H1 (cell line): ENCODE measurements at regions of chr15 and their contacts with region 1.

Region 1: DNA sequence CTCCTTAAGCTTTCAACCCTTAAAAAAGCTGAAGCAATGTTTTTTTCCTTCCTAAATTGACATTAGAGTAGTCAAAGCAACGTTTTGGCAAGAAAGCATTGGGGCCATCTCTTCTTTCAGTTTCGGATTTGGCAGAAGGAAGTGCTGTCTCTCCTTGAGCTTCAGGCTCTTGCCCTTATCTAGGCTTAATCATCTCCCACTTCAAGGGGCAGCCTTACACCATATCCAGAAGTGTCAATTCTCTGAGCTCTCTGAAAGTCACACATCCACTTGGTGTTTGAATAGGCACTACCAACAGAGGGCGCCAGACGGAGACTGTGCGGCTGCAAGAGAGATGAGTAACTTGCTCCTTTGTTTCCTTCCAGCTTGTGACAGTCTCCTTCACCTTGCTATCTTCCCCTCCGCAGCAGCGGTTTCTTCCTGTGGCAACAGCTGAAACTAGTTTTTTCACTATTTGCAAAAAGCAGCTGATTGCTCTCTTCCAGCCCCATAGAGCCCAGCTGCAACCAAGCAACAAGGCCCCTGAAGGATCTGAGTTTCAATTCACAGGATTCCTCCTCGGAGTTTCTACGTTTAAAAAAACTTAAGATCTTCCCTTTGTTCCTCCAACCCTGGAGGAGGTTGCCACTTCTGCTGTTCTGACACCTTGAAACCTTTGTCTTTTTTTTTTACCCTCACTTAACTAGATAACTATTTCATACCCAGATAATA is 147.0 kb upstream of the SLCO3A1 start:
- DNase-seq: peak; percentile 72 to 87
- H3K4me3 ChIP-seq: no peak overlapping the region
- H3K27ac ChIP-seq: no peak overlapping the region
- H3K4me1 ChIP-seq: peaks cover 0 to 3% (median 0%) of the 10 kb centered on the region in 4 experiments; a peak in 1 of 7 replicates
- H3K27me3 ChIP-seq: no peaks in the 10 kb centered on the region
- CTCF ChIP-seq: peak; percentile 69 to 97 (median 89)
- EP300 ChIP-seq: no peak
- POLR2A ChIP-seq: no peak
- RAD21 ChIP-seq: peak; percentile 78 to 86

Region 2: DNA sequence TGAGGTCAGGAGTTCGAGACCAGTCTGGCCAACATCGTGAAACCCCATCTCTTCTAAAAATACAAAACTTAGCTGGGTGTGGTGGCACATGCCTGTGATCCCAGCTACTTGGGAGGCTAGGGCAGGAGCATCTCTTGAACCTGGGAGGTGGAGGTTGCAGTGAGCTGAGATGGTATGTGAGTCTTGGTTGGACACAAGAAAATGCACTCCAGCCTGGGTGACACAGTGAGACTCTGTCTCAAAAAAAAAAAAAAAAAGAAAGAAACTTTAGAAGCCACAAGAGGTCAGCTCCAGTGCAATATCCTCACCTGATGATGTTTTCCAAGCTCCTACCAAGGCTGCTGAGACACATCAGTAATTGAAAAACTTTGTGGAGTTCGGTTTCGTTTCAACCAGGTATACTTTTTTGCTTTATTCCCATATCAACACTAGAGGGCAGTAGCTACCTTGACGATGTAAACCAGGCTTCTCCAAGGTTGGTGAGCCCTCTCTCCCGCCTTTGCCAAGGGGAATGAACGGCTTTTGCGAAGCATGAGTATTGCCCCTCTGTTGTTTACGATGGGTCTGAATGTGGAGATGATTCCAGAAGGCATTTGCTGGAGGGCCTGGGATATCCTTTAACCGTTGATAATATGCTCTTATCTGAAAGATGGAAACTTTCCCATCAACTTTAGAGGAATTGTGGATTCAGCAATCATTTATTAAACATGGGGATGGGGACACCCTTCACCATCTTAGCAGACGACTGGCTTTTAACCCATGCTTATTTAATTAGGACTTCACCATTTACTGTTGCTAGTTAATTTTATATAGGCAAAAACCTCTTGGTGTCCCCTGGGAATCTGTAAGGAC is 403.7 kb before region 1 on chr15:
- CTCF ChIA-PET with region 1: interaction called, 27 read pairs
- POLR2A ChIA-PET with region 1: no interaction called
- DNase-seq: peak; percentile 31 to 52
- H3K4me3 ChIP-seq: no peak overlapping the region
- H3K27ac ChIP-seq: no peak overlapping the region
- H3K4me1 ChIP-seq: no peaks in the 10 kb centered on the region
- H3K27me3 ChIP-seq: peaks cover 0 to 3% (median 2%) of the 10 kb centered on the region in 4 experiments; a peak in 3 of 7 replicates
- CTCF ChIP-seq: peak; percentile 18 to 82 (median 77)
- EP300 ChIP-seq: no peak
- POLR2A ChIP-seq: no peak
- RAD21 ChIP-seq: peak; percentile 98 to 99

Region 3: DNA sequence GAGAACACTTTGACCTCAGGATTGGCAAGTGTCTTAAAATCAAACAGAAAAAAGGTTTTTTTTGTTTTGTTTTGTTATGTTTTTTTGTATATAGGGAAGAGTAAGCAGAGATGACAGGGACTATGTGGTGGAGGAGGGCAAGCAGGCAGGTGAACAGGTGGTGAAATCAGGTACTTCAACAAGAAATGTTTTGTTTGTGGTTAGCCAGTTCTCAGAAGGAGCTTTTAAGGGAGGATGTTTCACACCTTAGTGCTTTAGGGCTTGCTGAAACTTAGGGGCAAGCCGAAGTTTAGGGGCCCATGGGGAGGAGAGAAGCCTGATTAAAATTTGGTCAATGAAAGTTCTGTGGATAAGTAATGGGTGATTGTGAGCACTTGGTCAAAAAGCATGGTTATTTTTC is 223.7 kb before region 1 on chr15:
- CTCF ChIA-PET with region 1: no interaction called
- POLR2A ChIA-PET with region 1: no interaction called
- DNase-seq: no peak
- H3K4me3 ChIP-seq: no peak overlapping the region
- H3K27ac ChIP-seq: no peak overlapping the region
- H3K4me1 ChIP-seq: no peaks in the 10 kb centered on the region
- H3K27me3 ChIP-seq: no peaks in the 10 kb centered on the region
- CTCF ChIP-seq: no peak
- EP300 ChIP-seq: no peak
- POLR2A ChIP-seq: no peak
- RAD21 ChIP-seq: no peak

Region 4: GRCh38 chr15:91694831-91695210 is 11.7 kb before region 1 on chr15:
- CTCF ChIA-PET with region 1: interaction called, 50 read pairs
- POLR2A ChIA-PET with region 1: no interaction called
- DNase-seq: no peak
- H3K4me3 ChIP-seq: no peak overlapping the region
- H3K27ac ChIP-seq: no peak overlapping the region
- H3K4me1 ChIP-seq: no peaks in the 10 kb centered on the region
- H3K27me3 ChIP-seq: no peaks in the 10 kb centered on the region
- CTCF ChIP-seq: no peak
- EP300 ChIP-seq: no peak
- POLR2A ChIP-seq: no peak
- RAD21 ChIP-seq: no peak

Region 5: DNA sequence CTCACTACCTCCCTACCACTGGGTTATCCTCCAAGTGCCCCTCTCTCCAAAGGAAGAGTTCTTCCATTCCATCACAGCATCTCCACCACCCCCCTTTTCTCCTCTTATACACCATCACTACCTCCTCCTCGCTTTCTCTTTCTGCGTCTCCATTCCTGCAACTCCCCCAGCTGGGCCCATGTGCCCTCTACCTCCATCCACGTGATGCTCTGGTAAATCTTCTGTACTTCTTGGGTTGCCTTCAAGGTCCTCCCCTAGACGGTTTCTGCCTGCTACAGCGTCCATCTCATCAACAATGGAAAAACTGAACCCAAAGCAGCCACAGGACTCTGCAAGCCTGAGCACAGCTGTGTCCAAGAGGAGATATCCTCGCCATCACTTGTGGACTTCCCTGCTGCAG is 17.5 kb after region 1 on chr15:
- CTCF ChIA-PET with region 1: interaction called, 39 read pairs
- POLR2A ChIA-PET with region 1: no interaction called
- DNase-seq: no peak
- H3K4me3 ChIP-seq: no peak overlapping the region
- H3K27ac ChIP-seq: no peak overlapping the region
- H3K4me1 ChIP-seq: no peaks in the 10 kb centered on the region
- H3K27me3 ChIP-seq: no peaks in the 10 kb centered on the region
- CTCF ChIP-seq: no peak
- EP300 ChIP-seq: no peak
- POLR2A ChIP-seq: no peak
- RAD21 ChIP-seq: no peak

Region 6: DNA sequence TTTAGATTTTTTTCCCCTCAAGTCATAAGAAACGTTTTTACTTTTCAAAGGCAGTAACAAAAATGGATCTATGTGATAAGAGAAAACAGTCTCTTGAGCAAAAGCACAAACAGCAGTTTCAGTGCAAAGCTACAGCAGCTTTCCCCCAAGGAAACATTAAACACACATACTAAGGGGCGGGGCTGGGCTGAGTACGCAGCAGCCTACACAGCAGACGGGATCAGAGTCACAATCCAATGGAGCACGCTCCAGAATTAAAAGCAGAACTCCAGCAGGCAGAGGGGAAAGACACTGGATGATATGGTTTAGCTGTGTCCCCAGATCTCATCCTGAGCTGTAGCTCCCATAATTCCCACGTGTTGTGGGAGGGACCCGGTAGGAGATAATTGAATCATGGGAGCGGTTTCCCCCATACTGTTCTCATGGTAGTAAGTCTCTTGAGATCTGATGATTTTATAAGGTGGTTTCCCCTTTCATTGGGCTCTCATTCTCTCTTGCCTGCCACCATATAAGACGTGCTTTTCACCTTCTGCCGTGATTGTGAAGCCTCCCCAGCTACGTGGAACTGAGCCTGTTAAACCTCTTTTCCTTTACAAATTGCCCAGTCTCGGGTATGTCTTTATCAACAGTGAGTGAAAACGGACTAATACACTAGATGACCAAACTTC is 30.8 kb after region 1 on chr15:
- CTCF ChIA-PET with region 1: interaction called, 14 read pairs
- POLR2A ChIA-PET with region 1: no interaction called
- DNase-seq: no peak
- H3K4me3 ChIP-seq: no peak overlapping the region
- H3K27ac ChIP-seq: no peak overlapping the region
- H3K4me1 ChIP-seq: no peaks in the 10 kb centered on the region
- H3K27me3 ChIP-seq: no peaks in the 10 kb centered on the region
- CTCF ChIP-seq: no peak
- EP300 ChIP-seq: no peak
- POLR2A ChIP-seq: no peak
- RAD21 ChIP-seq: no peak

Region 7: GRCh38 chr15:91844928-91845327 is 138.5 kb after region 1 on chr15:
- CTCF ChIA-PET with region 1: interaction called, 33 read pairs
- POLR2A ChIA-PET with region 1: no interaction called
- DNase-seq: no peak
- H3K4me3 ChIP-seq: no peak overlapping the region
- H3K27ac ChIP-seq: no peak overlapping the region
- H3K4me1 ChIP-seq: 0 out of 7 replicates have a peak, but pooled peaks cover 0 to under 1% (median 0%) of the 10 kb centered on the region in 4 experiments
- H3K27me3 ChIP-seq: 0 out of 7 replicates have a peak, but pooled peaks cover 0 to 2% (median 1%) of the 10 kb centered on the region in 4 experiments
- CTCF ChIP-seq: no peak
- EP300 ChIP-seq: no peak
- POLR2A ChIP-seq: no peak
- RAD21 ChIP-seq: no peak

Region 8: DNA sequence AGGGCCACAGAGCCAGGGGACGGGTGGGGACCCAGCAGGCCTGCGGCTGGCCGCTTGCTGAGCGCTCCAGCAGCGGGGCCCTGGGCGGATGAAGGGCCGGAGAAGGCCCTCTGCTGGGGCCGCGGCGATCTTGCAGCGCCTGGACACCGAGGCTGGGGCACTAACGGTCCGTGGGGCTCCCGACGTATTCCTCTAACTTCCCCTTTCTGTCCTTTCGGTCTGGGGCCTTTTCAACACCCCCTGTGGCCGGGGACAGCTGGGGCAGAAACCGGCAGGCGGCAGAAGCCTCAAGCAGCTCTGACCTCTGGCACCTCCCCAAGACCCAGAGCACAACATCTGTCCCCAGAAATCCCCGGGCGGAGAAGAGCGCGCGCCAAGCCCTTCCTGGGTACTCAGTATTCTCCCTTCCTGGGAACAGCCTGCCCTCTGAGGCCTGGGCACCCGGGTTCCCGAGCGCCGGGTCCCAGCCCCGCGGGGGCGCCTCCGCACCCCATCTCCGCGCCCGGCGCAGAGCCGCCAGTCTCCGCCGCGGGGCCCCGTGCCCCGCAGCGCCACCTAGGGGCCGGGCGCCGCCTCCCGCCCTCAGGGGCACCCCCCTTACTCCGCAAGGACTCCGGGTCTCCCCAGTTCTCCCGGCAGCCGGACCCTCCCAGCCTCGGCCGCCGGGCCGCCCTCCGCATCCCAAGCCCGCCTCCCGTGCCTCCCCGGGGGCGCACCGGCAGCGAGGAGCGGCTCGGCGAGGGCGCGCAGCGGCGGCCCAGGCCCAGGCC is 146.4 kb after region 1 on chr15:
- CTCF ChIA-PET with region 1: interaction called, 33 read pairs
- POLR2A ChIA-PET with region 1: interaction called, 3 read pairs
- DNase-seq: peak in 1 of 2 experiments; percentile 86
- H3K4me3 ChIP-seq: peak overlapping the region; percentile 66 to 86 (median 74)
- H3K27ac ChIP-seq: no peak overlapping the region
- H3K4me1 ChIP-seq: peaks cover 7 to 15% (median 11%) of the 10 kb centered on the region in 4 experiments; a peak in 6 of 7 replicates
- H3K27me3 ChIP-seq: peaks cover 0 to 11% (median 10%) of the 10 kb centered on the region in 4 experiments; a peak in 5 of 7 replicates
- CTCF ChIP-seq: peak; percentile 63 to 88 (median 76)
- EP300 ChIP-seq: no peak
- POLR2A ChIP-seq: peak in 1 of 2 experiments; percentile 19; a peak in 1 of 3 replicates
- RAD21 ChIP-seq: peak; percentile 50 to 56

Region 9: DNA sequence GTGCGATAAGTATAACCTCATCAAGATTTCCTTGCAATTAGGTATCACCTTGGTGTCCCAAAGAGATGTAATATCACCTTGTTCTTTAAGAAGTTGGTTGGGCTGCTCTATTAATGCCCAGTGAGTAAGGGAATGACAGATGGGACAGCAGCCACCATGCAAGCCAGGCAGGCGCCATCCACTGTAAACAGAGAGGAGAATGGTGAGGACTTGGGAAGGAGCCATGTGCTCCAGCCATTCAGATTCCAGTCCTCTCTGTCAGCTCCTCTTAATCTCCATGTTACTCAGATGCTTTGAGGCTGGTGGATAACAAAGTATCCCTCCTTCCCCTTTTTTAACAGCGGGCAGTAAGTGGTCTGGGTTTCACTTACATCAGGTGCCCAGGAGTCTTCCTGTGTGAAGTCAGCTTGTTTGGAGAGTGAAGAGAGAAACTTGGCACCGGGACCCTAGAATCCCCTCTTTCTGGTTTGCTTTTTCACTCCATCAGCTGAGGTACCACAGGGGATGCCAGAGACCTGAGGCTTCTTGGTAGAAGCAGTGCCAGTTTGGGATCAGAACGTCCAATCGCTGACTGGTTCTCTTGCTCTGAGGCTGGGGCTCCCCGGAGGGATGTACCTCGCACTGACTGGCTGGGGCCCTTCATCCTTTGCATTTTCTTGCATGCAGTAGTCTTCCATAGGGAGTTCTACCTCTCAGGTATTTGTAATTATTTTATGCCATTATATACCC is 176.5 kb after region 1 on chr15:
- CTCF ChIA-PET with region 1: no interaction called
- POLR2A ChIA-PET with region 1: no interaction called
- DNase-seq: peak in 1 of 2 experiments; percentile 36
- H3K4me3 ChIP-seq: no peak overlapping the region; a peak in 1 of 8 replicates
- H3K27ac ChIP-seq: no peak overlapping the region
- H3K4me1 ChIP-seq: peaks cover 3 to 19% (median 12%) of the 10 kb centered on the region in 4 experiments; a peak in 6 of 7 replicates
- H3K27me3 ChIP-seq: no peaks in the 10 kb centered on the region
- CTCF ChIP-seq: no peak
- EP300 ChIP-seq: no peak
- POLR2A ChIP-seq: no peak
- RAD21 ChIP-seq: no peak

Region 10: GRCh38 chr15:91896341-91897055 is 190.0 kb after region 1 on chr15:
- CTCF ChIA-PET with region 1: no interaction called
- POLR2A ChIA-PET with region 1: no interaction called
- DNase-seq: no peak
- H3K4me3 ChIP-seq: no peak overlapping the region
- H3K27ac ChIP-seq: no peak overlapping the region
- H3K4me1 ChIP-seq: peaks cover 0 to 16% (median 2%) of the 10 kb centered on the region in 4 experiments; a peak in 4 of 7 replicates
- H3K27me3 ChIP-seq: no peaks in the 10 kb centered on the region
- CTCF ChIP-seq: no peak
- EP300 ChIP-seq: no peak
- POLR2A ChIP-seq: no peak
- RAD21 ChIP-seq: no peak

Region 11: DNA sequence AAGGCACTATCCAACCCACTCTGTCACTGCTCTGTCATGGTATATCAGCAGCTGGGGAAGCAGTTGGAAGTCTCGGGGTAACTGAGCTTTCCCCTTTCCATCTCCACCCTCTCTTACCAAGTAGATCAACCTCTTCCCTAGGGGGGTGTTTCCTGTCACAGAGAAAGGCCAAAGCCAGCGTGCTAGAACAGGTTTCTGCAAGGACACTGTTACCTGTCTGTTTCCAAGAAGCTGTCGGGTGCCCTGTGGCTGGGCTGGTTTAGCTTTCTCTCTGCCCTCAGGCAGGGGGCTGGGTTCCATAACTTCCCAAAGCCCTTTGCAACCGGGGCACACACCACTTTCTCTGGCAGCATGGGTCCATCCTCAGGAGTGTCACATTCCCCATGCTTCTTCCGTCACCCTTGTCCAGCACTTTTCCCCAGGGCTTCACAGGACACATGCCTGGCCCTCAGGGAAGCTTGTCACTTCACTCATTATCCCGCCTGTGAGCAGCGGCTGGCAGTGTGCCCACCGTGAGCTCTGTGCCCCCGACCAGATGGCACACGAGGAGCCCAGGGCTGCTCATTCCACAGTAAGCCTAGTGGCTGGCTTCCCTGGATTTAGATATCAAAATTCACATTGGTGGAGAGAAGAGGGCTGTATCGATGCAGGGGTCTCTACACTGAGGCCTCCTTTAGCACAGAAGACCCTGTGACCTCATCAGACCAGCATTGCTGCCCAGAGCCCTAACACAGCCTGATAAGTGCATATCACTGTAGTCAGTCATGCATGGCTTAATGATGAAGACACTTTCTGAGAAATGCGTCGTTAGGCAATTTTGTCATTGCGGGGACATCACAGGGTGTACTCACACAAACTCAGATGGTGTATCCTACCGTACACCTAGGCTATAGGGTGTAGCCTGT is 352.8 kb after region 1 on chr15:
- CTCF ChIA-PET with region 1: no interaction called
- POLR2A ChIA-PET with region 1: no interaction called
- DNase-seq: no peak
- H3K4me3 ChIP-seq: no peak overlapping the region
- H3K27ac ChIP-seq: no peak overlapping the region
- H3K4me1 ChIP-seq: no peaks in the 10 kb centered on the region
- H3K27me3 ChIP-seq: no peaks in the 10 kb centered on the region; a peak in 1 of 7 replicates
- CTCF ChIP-seq: no peak
- EP300 ChIP-seq: no peak
- POLR2A ChIP-seq: no peak
- RAD21 ChIP-seq: no peak